Activated CD4-positive, alpha-beta memory T cell treated with anti-CD3 and anti-CD28 coated beads, Interleukin-2, amount 10 ng/mL, durations not matched to agents 7 days and 5 days (primary cell): ENCODE measurements at regions of chr7 and their contacts with region 1.

Region 1: DNA sequence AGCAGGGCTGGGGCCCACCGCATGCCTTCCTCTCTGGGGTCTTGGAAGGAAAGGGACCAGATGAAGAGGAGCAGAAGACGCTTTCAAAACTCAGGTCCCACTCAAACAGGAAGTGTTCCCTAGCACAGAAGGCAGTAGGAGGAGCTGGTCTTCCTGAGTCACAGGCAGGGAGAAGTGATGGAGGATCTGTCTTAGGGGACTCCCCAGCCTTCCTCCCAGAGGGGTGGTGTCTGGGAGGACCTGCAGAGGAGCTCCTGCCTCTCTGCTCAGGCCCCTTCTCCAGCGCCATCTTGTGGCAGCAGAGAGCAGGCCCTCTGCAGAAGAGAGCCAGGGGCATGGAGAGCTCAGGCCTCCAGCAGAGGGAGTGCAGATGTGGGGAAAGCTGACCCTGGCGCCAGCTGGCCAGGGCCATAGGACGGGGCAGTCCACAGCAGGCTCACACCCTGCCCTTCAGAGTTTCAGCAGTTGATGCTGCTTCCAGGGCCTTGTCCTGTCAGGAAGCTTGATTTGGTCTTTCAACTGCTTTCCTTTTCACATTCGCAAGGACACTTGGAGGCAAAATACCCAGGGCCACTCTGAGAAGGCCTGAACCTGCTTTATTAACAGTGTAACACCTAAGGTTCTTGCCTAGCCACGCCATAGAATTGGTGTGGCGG is 62.2 kb upstream of the TARP start:
- DNase-seq: peak; percentile 85
- H3K4me3 Mint-ChIP-seq: peak overlapping the region; percentile 75
- H3K27ac Mint-ChIP-seq: peak overlapping the region; percentile 74
- H3K4me1 Mint-ChIP-seq: peaks cover 56% of the 10 kb centered on the region
- H3K27me3 Mint-ChIP-seq: no peaks in the 10 kb centered on the region

Region 2: GRCh38 chr7:38107486-38107893 is 228.1 kb before region 1 on chr7:
- CTCF ChIA-PET with region 1: interaction called, 20 read pairs
- POLR2A ChIA-PET with region 1: no interaction called
- DNase-seq: peak; percentile 69
- H3K4me3 Mint-ChIP-seq: no peak overlapping the region
- H3K27ac Mint-ChIP-seq: no peak overlapping the region
- H3K4me1 Mint-ChIP-seq: no peaks in the 10 kb centered on the region
- H3K27me3 Mint-ChIP-seq: peaks cover 27% of the 10 kb centered on the region

Region 3: DNA sequence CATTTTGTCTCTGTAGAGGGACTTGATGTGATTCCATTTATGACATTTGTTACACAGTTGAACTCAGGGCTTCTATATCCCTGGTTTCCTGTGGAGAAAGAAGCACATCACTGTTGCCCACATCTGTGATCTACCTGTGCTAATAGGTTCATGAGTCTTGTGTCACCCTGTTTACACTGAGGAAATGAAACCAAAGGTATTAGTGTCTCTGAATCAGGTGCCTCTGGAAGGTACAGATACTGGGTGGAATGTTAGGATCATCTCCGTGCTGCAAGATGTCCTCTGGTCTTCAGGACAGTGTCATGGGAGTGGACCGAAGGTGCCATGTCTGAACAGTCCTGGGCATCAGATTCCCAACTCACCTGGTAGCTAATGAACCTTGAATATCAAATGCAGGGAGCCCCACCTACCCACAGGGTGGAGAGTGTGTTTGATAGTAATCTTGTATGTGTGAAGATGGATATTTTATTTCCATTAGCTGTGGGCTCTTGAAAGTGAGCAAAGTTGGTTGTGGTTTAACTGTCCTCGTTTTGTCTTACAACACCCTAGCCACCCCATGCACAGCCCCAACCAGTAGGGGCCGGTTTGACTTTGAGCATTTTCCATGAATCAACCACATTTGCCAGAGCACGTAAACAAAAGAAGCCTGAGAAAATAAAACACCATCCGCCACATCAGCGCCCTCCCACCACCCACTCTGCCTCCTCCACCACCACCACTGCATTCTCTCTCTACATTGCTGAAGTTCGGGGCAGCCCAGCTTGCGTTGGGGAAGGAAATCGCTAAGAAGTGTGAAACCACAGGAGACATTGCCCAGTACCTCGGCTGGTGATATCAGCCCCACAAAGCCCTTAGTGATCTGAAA is 102.9 kb before region 1 on chr7:
- CTCF ChIA-PET with region 1: interaction called, 40 read pairs
- POLR2A ChIA-PET with region 1: interaction called, 11 read pairs
- DNase-seq: peak; percentile 91
- H3K4me3 Mint-ChIP-seq: peak overlapping the region; percentile 50
- H3K27ac Mint-ChIP-seq: peak overlapping the region; percentile 94
- H3K4me1 Mint-ChIP-seq: peaks cover 75% of the 10 kb centered on the region
- H3K27me3 Mint-ChIP-seq: no peaks in the 10 kb centered on the region

Region 4: GRCh38 chr7:38318803-38319416 is 16.7 kb before region 1 on chr7:
- CTCF ChIA-PET with region 1: interaction called, 18 read pairs
- POLR2A ChIA-PET with region 1: no interaction called
- DNase-seq: no peak
- H3K4me3 Mint-ChIP-seq: peak overlapping the region; percentile 64
- H3K27ac Mint-ChIP-seq: peak overlapping the region; percentile 81
- H3K4me1 Mint-ChIP-seq: peaks cover 41% of the 10 kb centered on the region
- H3K27me3 Mint-ChIP-seq: no peaks in the 10 kb centered on the region

Region 5: DNA sequence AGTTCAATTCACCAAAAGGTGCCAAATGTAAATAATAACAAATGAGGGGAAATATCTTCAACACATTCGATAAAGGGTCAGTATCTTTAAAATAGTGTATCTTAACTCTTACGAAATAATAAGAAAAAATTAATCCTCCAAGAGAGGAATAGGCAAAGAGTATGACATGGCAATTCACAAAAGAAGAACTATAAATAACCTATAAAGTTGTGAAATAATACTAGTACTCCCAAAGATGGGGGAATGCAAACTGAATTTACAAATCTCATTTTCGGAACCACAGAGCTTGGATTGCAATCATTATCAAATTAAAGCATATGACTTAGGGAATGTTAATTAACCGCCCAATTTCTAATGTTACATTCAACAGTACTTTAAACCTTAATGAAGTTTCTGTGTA is 16.0 kb after region 1 on chr7:
- CTCF ChIA-PET with region 1: interaction called, 44 read pairs
- POLR2A ChIA-PET with region 1: interaction called, 6 read pairs
- DNase-seq: no peak
- H3K4me3 Mint-ChIP-seq: peak overlapping the region; percentile 41
- H3K27ac Mint-ChIP-seq: no peak overlapping the region
- H3K4me1 Mint-ChIP-seq: peaks cover 28% of the 10 kb centered on the region
- H3K27me3 Mint-ChIP-seq: no peaks in the 10 kb centered on the region